Activated T-helper 2 cell treated with anti-CD3 and anti-CD28 coated beads, Interferon-gamma antibody, Interleukin-2, Interleukin-4, amounts not matched to agents 10 μg/mL and 5 μg/mL and 100 μg/mL, durations not matched to agents 14 hours and 24 hours and 36 hours (primary cell): ENCODE measurements at regions of chr2 and their contacts with region 1.

Region 1: GRCh38 chr2:43559391-43560230 is 36.2 kb downstream of the THADA start:
- DNase-seq: no peak
- H3K4me3 Mint-ChIP-seq: peak overlapping the region; percentile 20
- H3K27ac Mint-ChIP-seq: peak overlapping the region; percentile 89
- H3K4me1 Mint-ChIP-seq: peaks cover 53% of the 10 kb centered on the region
- H3K27me3 Mint-ChIP-seq: no peaks in the 10 kb centered on the region

Region 2: GRCh38 chr2:43507137-43507536 is 52.5 kb before region 1 on chr2:
- intact Hi-C with region 1: loop called (anchors 1 kb)
- DNase-seq: no peak
- H3K4me3 Mint-ChIP-seq: no peak overlapping the region
- H3K27ac Mint-ChIP-seq: peak overlapping the region; percentile 48
- H3K4me1 Mint-ChIP-seq: peaks cover 32% of the 10 kb centered on the region
- H3K27me3 Mint-ChIP-seq: no peaks in the 10 kb centered on the region

Region 3: DNA sequence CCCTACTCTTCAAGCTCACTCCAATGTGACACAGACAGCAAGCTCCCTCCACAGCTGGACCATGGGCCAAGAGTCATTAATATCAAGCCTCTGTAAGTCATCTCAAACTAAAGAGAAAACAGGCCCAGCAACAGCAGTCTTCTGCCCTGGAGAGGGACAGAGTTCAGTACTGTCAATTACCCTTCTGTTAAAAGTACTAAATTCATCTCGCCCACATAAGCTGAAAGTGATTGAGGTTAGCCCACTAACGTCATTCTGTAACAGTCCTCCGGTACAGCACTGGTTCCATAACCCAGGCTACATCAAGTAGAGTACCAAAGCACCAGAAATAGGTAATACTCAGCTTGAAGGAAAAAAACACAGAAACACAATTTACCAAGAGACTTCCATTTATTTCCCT is 10.3 kb after region 1 on chr2:
- intact Hi-C with region 1: loop called (anchors 1 kb)
- DNase-seq: no peak
- H3K4me3 Mint-ChIP-seq: peak overlapping the region; percentile 31
- H3K27ac Mint-ChIP-seq: peak overlapping the region; percentile 91
- H3K4me1 Mint-ChIP-seq: peaks cover 44% of the 10 kb centered on the region
- H3K27me3 Mint-ChIP-seq: no peaks in the 10 kb centered on the region

Region 4: DNA sequence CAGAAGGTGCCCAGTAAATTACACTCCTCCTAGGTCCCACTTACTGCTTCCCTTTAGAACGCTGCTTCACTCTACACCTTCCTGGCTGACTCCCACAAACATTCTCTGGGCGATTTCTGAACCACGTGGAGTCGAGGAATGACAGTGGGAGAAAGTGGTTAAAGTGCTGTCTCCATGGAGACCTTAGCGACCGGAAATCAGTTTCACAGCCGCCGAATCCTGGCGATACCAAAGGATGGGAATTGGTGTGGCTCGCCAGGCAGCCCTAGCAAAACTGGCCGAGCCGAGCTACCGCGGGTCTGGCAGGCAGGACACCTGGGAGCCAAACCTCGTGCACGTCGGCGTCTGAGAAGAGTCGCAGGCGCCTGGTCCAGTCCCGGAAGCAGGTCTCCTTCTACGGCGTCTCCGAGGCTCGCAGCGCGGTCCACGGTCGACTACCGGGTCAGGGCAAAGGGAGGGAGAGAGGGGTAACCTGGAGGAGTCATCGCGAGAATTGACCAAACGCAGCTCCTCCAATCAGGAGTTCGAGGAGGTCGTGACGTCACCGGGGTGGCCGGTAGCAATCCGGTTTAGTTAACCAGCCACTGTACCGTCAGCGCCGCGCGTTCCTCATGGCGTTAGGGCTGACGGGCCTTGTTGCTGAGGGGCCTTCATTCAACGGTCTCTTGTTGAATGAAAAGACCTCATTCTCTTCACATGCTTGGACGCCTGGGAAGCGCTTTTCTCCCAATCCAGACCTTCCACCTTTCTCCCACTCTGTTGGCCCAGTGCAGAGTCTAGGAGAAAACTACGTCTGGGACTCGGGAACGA is 36.2 kb after region 1 on chr2 and contains the start of gene THADA:
- intact Hi-C with region 1: loop called (anchors 1 kb)
- DNase-seq: peak; percentile 97
- H3K4me3 Mint-ChIP-seq: peak within 1 kb of the TSS; percentile 92
- H3K27ac Mint-ChIP-seq: peak within 1 kb of the TSS; percentile 98
- H3K4me1 Mint-ChIP-seq: peaks cover 32% of the 10 kb centered on the region
- H3K27me3 Mint-ChIP-seq: no peaks in the 10 kb centered on the region
- total RNA-seq, gene THADA: 48.3 and 48.4 TPM in 2 replicates

Region 5: GRCh38 chr2:43605851-43606250 is 46.2 kb after region 1 on chr2:
- intact Hi-C with region 1: no loop called
- DNase-seq: no peak
- H3K4me3 Mint-ChIP-seq: no peak overlapping the region
- H3K27ac Mint-ChIP-seq: no peak overlapping the region
- H3K4me1 Mint-ChIP-seq: peaks cover 18% of the 10 kb centered on the region
- H3K27me3 Mint-ChIP-seq: no peaks in the 10 kb centered on the region

Region 6: GRCh38 chr2:43934567-43934966 is 375.0 kb after region 1 on chr2:
- intact Hi-C with region 1: loop called (anchors 1 kb)
- DNase-seq: no peak
- H3K4me3 Mint-ChIP-seq: no peak overlapping the region
- H3K27ac Mint-ChIP-seq: peak overlapping the region; percentile 86
- H3K4me1 Mint-ChIP-seq: peaks cover 26% of the 10 kb centered on the region
- H3K27me3 Mint-ChIP-seq: no peaks in the 10 kb centered on the region